ENCODE measurements at regions of chr10 and their contacts with region 1.

Region 1: DNA sequence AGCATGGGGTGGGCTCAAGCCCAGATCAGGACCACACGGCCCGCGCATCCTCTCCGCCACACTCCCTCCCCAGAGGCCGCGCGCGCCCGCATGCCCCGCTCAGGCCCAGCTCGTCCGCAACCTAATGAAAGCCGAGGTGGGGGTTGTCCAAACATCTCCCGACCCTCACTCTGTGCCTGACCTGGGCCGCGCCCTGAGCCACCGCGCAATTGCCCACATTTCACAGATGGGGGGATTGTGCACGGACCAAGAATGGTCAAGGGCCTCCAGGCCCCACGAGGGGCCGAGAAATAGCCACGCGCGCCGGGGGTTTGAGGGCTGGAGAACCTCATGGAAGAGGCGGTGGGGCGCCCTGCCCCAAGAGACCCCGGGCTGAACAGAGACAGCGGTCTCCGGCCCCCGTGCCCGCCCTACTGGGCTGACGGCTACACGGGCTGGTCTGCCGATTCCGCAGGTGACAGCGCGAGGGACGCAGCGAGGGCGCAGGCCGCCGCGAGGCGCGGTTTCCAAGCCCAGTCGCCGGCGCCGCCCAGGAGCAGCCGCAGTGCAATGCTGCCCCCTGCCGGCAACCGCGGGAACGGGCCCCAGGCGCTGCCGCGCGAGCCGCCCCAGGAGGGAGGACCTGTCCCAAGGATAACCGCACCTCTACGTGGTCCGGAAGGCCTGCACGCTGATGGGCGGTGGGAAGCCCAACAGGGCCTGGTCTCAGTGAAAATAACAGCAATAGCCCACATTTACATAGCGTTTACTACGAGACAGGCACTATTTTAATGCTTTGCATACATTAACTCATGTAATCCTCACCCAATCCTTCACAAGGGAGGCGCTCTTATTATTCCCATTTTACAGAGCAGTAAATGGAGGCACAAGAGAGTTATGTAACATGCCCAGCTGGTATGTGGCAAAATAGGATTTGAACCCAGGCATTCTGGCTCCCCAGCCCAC is 10.5 kb upstream of the GRID1 start:
- DNase-seq: peak in 9 of 10 donors; percentile 62 to 90 (median 76)
- H3K4me3 ChIP-seq: peak overlapping the region in 58 of 59 donors; percentile 29 to 66 (median 53)
- H3K27ac ChIP-seq: peak overlapping the region in 8 of 59 donors; percentile 22 to 75 (median 48)
- H3K27me3 ChIP-seq: peaks cover 0 to 10% (median 0%) of the 10 kb centered on the region in 45 donors
- CTCF ChIP-seq: peak; percentile 89 to 100 (median 100)

Region 2: DNA sequence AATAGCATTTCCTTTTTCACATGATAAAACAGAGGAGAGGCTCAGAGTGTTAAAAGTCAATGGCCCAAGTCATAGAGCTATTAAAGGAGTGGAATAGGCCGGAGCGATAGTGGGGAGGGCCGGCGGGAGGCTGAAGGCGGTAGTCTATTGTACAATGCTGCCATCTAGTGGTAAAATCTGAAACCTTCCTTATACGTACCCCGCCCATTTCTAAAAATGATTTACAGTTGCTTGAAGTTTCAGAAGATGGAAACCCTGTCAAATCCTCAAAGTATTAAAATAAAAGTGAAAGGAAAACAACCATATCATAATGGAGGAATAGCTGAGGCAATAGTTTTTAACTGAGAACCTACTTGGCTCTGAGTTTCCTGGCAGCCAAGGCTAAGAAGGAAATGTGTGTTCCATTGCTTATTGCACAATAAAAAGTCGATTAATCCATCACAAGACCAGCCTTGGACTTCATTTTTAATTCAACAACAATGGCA is 1839.6 kb before region 1 on chr10:
- intact Hi-C with region 1: loop called in 1 of 2 experiments (anchors 5 kb)
- DNase-seq: peak in 5 of 10 donors; percentile 26 to 51 (median 45)
- H3K4me3 ChIP-seq: peak overlapping the region in 5 of 59 donors; percentile 17 to 35 (median 30)
- H3K27ac ChIP-seq: no peak overlapping the region
- H3K27me3 ChIP-seq: peaks cover 0 to 5% (median 0%) of the 10 kb centered on the region in 45 donors
- CTCF ChIP-seq: peak; percentile 78 to 99 (median 92)

Region 3: DNA sequence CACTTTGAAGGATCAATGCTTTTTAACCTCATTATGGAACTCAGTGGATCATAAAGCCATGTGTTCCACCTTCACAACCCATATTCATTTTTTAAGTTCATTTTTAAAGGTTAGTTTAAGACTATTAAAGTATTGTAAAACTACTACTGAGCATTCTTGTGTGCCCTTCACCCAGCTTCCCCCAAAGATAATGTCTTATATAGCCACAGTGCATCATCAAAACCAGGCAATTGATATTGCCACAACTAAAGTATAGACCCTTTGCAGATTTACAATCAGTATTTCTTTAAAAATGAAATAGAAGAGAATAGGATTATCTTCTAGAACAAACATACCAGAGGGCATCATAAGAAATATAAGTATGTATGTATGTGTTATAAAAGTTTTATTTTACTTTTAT is 1451.6 kb before region 1 on chr10:
- intact Hi-C with region 1: loop called in 1 of 2 experiments (anchors 5 kb)
- DNase-seq: no peak
- H3K4me3 ChIP-seq: no peak overlapping the region
- H3K27ac ChIP-seq: no peak overlapping the region
- H3K27me3 ChIP-seq: no peaks in the 10 kb centered on the region
- CTCF ChIP-seq: no peak

Region 4: GRCh38 chr10:85548034-85548433 is 829.1 kb before region 1 on chr10:
- intact Hi-C with region 1: loop called in 1 of 2 experiments (anchors 5 kb)
- DNase-seq: peak; percentile 7 to 85 (median 54)
- H3K4me3 ChIP-seq: no peak overlapping the region
- H3K27ac ChIP-seq: peak overlapping the region in 1 of 59 donors; percentile 34
- H3K27me3 ChIP-seq: no peaks in the 10 kb centered on the region
- CTCF ChIP-seq: peak in 55 of 56 donors; percentile 52 to 87 (median 72)

Region 5: GRCh38 chr10:85791818-85792532 is 585.1 kb before region 1 on chr10:
- intact Hi-C with region 1: loop called in 1 of 2 experiments (anchors 5 kb)
- DNase-seq: peak in 1 of 10 donors; percentile 58
- H3K4me3 ChIP-seq: no peak overlapping the region
- H3K27ac ChIP-seq: peak overlapping the region in 14 of 59 donors; percentile 1 to 56 (median 26)
- H3K27me3 ChIP-seq: no peaks in the 10 kb centered on the region
- CTCF ChIP-seq: peak in 51 of 56 donors; percentile 13 to 61 (median 45)

Region 6: GRCh38 chr10:85995791-85996190 is 381.3 kb before region 1 on chr10:
- intact Hi-C with region 1: loop called in 1 of 2 experiments (anchors 5 kb)
- DNase-seq: peak in 4 of 10 donors; percentile 14 to 61 (median 56)
- H3K4me3 ChIP-seq: no peak overlapping the region
- H3K27ac ChIP-seq: peak overlapping the region in 1 of 59 donors; percentile 19
- H3K27me3 ChIP-seq: no peaks in the 10 kb centered on the region
- CTCF ChIP-seq: peak in 54 of 56 donors; percentile 23 to 74 (median 58)

Region 7: DNA sequence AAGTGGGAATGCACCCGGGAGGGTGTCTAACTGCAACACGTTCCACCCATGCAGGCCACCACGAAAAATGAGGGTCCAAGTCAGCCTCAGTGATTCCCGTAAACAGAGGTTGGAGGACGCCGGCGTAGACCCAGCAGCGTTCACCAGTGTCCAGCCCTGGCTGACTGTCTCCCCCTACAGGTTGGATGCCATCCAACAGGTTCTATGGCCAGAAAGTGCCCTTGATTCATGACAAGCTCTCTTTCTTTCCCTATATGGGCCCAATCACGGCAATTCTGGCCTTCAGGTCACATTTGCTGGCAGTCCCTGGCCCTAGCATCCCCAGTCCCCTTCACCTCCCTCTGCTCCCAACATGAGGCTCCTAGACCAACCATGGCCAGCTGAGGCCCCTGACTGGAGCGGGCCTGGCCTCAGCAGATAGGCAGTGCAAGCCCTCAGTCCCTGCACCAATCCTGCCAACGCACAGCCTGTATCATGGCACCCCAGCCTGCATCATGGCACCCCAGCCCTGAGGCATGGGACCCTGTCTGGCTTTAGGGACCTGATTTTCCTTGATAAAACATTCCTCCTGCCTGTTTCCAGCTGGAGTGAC is 238.0 kb before region 1 on chr10:
- intact Hi-C with region 1: no loop called
- DNase-seq: peak in 5 of 10 donors; percentile 39 to 76 (median 48)
- H3K4me3 ChIP-seq: no peak overlapping the region
- H3K27ac ChIP-seq: no peak overlapping the region
- H3K27me3 ChIP-seq: no peaks in the 10 kb centered on the region
- CTCF ChIP-seq: peak in 53 of 56 donors; percentile 16 to 77 (median 55)

Region 8: GRCh38 chr10:86349474-86349873 is 27.6 kb before region 1 on chr10:
- intact Hi-C with region 1: loop called in 1 of 2 experiments (anchors 2 kb)
- DNase-seq: peak in 2 of 10 donors; percentile 43 to 47
- H3K4me3 ChIP-seq: no peak overlapping the region
- H3K27ac ChIP-seq: peak overlapping the region in 29 of 59 donors; percentile 3 to 98 (median 46)
- H3K27me3 ChIP-seq: no peaks in the 10 kb centered on the region
- CTCF ChIP-seq: peak in 34 of 56 donors; percentile 1 to 56 (median 29)

Region 9: GRCh38 chr10:86419101-86419500 is 42.0 kb after region 1 on chr10:
- intact Hi-C with region 1: no loop called
- DNase-seq: no peak
- H3K4me3 ChIP-seq: no peak overlapping the region
- H3K27ac ChIP-seq: no peak overlapping the region
- H3K27me3 ChIP-seq: no peaks in the 10 kb centered on the region
- CTCF ChIP-seq: no peak

Measured in dorsolateral prefrontal cortex (tissue), 120 donors.